Activated T-helper 1 cell treated with anti-CD3 and anti-CD28 coated beads, Interleukin-12 subunit alpha, Interleukin-12 subunit beta, Interleukin-2, Interleukin-4 antibody, amounts not matched to agents 30 ng/mL and 10 ng/mL and 1 ng/mL, durations not matched to agents 14 hours and 24 hours and 36 hours (primary cell): ENCODE measurements at regions of chr10 and their contacts with region 1.

Region 1: GRCh38 chr10:129956876-129957673 is 7.0 kb downstream of the EBF3 start:
- DNase-seq: no peak
- H3K4me3 Mint-ChIP-seq: no peak overlapping the region
- H3K27ac Mint-ChIP-seq: no peak overlapping the region
- H3K4me1 Mint-ChIP-seq: peaks cover 13% of the 10 kb centered on the region
- H3K27me3 Mint-ChIP-seq: peaks cover 62% of the 10 kb centered on the region

Region 2: DNA sequence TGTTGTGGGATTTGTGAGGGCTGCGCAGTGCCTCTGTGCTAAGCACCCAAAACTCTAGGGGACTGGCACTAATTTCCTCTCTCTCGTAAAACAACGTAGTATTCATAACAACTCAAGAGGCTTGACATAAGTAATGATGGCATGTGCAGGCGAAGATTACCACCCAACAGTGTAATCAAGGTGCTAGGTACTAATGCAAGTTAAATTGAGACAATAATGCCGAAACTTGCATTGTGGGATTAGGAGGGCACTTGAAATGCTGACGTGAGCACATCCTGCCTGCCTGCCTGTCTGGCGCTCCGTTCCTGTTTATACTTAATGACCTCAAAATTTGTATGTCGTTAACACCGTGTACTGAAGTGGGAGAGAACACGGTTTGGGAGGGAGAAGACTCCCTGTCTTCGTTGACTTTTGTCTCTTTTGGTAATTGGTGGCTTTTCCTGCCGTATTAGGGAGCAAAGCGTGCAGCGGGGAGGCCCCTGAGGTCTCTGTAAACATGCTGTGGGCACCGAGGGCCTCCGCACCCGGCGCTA is 351.0 kb before region 1 on chr10:
- intact Hi-C with region 1: no loop called
- DNase-seq: no peak
- H3K4me3 Mint-ChIP-seq: no peak overlapping the region
- H3K27ac Mint-ChIP-seq: no peak overlapping the region
- H3K4me1 Mint-ChIP-seq: no peaks in the 10 kb centered on the region
- H3K27me3 Mint-ChIP-seq: no peaks in the 10 kb centered on the region

Region 3: GRCh38 chr10:129744134-129745111 is 212.7 kb before region 1 on chr10:
- intact Hi-C with region 1: no loop called
- DNase-seq: no peak
- H3K4me3 Mint-ChIP-seq: no peak overlapping the region
- H3K27ac Mint-ChIP-seq: no peak overlapping the region
- H3K4me1 Mint-ChIP-seq: no peaks in the 10 kb centered on the region
- H3K27me3 Mint-ChIP-seq: no peaks in the 10 kb centered on the region

Region 4: DNA sequence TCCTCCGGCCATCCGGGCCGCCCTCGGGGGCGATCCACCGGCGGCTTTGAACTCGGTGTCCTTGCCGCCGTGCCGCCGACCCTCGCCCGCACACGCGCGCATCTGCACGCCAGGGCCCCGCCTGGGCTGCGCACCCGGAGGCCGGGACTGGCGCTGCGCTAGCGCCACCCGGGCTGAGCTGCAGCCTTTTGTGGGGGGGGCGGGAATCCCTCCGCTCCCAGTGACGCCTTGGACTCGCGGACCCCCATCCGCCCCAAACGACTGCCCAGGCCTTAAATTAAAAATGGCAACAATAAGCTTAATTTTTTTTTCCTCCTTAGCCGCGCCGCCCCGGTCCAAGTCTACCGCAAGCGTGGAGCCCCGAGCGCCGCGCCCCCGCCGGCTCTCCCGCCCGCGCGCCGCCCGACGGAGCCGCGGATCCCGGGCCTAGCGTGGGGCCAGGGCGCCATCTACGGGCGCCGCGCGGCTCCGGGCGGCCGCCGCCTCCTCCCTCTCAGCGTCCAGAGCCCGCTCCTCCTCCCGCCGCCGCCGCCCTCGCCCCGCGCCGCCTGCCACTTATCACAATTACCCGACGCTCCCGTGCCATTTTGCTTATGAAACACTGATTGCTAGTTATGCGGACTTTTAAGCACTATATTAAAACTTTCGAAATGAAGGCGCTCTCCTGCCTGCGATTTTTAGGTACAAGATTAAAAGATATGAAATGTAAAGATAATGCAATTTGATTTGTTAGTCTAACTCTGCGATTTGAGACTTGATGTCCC is 14.5 kb after region 1 on chr10:
- intact Hi-C with region 1: loop called (anchors 1 kb)
- DNase-seq: no peak
- H3K4me3 Mint-ChIP-seq: peak overlapping the region; percentile 58
- H3K27ac Mint-ChIP-seq: peak overlapping the region; percentile 88
- H3K4me1 Mint-ChIP-seq: peaks cover 13% of the 10 kb centered on the region
- H3K27me3 Mint-ChIP-seq: peaks cover 38% of the 10 kb centered on the region

Region 5: GRCh38 chr10:130021383-130021950 is 64.4 kb after region 1 on chr10:
- intact Hi-C with region 1: no loop called
- DNase-seq: no peak
- H3K4me3 Mint-ChIP-seq: no peak overlapping the region
- H3K27ac Mint-ChIP-seq: no peak overlapping the region
- H3K4me1 Mint-ChIP-seq: no peaks in the 10 kb centered on the region
- H3K27me3 Mint-ChIP-seq: no peaks in the 10 kb centered on the region